ENCODE measurements at regions of chr16 and their contacts with region 1.

Region 1: GRCh38 chr16:27980919-27981700 is 82.4 kb downstream of the GSG1L start:
- DNase-seq: peak; percentile 51
- ATAC-seq: peak; percentile 85 to 87

Region 2: DNA sequence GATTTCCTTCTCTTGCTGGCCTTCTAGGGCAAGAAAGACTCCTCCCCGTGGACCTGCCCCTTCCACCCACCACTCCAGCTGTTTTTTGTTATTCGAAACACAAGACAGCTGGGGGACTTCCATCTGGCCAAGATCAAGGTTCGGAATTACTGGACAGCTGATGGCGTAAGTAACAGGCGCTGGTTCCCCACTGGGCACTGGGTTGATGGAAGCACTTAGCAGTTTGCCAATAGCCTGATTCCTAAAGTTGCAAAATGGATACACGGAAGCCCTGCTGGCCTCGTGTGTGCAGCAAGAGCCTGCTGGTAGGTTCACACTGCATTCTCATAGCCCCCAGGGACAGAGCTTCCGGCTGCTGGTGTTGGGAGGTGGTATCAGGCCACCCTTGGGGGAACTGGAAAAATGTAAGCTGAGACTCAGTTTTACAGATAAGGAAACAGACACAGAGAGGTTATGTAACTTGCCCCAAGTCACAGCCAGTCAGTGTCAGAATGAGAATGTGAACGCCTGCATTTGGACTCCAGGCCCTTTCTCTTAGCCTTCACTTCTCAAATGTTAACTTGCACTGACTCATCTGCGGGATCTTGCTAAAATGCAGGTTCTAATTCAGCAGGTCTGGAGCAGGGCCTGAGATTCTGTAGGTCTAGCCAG is 259.5 kb before region 1 on chr16:
- intact Hi-C with region 1: loop called in 1 of 2 experiments (anchors 10 kb)
- DNase-seq: peak; percentile 78
- ATAC-seq: peak; percentile 71 to 82

Region 3: DNA sequence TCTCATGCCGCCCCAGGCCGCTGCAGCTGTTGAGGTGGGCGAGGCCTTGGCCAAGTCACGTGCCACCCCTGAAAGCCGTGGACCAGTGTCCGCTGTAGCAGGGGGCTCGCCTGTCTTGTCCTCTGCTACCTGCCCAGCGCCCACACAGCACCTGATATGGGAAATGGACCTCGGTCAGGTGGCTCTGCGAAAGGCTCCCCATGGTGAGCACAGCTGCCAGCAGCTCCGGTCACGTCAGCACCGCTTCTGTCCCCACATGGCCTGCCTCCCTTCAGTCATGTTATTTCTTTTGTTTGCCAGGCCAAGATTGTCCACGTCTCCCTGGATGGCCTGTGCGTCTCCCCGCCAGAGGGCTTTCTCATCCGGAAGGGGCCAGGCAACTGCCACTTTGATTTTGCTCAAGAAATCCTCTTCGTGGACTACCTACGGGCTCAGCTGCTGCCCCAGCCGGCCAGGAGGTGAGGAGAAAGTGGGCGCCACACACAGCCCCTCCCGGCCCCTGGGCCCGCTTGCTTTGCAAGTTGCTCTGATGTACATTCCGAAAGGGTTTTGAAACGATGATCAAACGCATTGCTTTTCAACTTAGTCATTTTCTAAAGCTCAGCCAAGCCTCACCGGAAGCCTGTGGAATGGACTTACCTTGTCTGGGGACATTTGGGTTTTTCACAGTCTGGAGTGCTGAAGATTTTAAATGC is 211.4 kb before region 1 on chr16:
- intact Hi-C with region 1: no loop called
- DNase-seq: no peak
- ATAC-seq: no peak